Heart left ventricle (tissue), 16 donors: ENCODE measurements at regions of chr4 and their contacts with region 1.

Region 1: GRCh38 chr4:102344954-102345794 is at the start of gene SLC39A8:
- DNase-seq: peak; percentile 81 to 92 (median 85)
- ATAC-seq: peak; percentile 86 to 97 (median 96)
- H3K4me3 ChIP-seq: peak within 1 kb of the TSS; percentile 42 to 82 (median 58)
- H3K27ac ChIP-seq: peak within 1 kb of the TSS in 11 of 12 donors; percentile 7 to 92 (median 58)
- H3K4me1 ChIP-seq: peaks cover 0 to 49% (median 7%) of the 10 kb centered on the region in 12 donors
- H3K27me3 ChIP-seq: no peaks in the 10 kb centered on the region
- CTCF ChIP-seq: peak; percentile 47 to 86 (median 78)
- POLR2A ChIP-seq: peak in 1 of 2 donors; percentile 46
- total RNA-seq, gene SLC39A8: 1.9 to 51.3 (median 3.0) TPM

Region 2: DNA sequence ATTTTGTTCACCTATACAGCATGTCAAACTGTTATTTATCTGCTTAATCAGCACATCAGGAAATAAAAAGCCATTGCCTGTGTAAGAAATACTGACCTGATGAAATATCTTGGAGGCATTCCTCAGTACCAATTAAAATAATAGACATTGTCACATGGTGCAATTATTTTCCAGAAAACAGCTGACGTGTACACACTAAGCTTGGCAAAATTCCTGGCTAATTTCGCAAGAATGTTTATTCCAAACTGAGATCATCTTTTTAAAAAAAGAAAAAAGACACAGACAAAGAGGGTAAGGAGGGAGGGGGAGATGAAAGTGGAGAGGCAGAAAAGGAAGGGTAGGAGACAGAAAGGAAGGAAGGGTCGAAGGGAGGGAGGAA is 94.1 kb after region 1 on chr4:
- intact Hi-C with region 1: loop called in 1 of 10 experiments (anchors 10 kb)
- DNase-seq: peak in 1 of 5 donors; percentile 12
- ATAC-seq: peak; percentile 54 to 88 (median 68)
- H3K4me3 ChIP-seq: no peak overlapping the region
- H3K27ac ChIP-seq: peak overlapping the region in 7 of 12 donors; percentile 0 to 62 (median 50)
- H3K4me1 ChIP-seq: peaks cover 0 to 24% (median 13%) of the 10 kb centered on the region in 12 donors
- H3K27me3 ChIP-seq: no peaks in the 10 kb centered on the region
- CTCF ChIP-seq: no peak
- POLR2A ChIP-seq: no peak

Region 3: DNA sequence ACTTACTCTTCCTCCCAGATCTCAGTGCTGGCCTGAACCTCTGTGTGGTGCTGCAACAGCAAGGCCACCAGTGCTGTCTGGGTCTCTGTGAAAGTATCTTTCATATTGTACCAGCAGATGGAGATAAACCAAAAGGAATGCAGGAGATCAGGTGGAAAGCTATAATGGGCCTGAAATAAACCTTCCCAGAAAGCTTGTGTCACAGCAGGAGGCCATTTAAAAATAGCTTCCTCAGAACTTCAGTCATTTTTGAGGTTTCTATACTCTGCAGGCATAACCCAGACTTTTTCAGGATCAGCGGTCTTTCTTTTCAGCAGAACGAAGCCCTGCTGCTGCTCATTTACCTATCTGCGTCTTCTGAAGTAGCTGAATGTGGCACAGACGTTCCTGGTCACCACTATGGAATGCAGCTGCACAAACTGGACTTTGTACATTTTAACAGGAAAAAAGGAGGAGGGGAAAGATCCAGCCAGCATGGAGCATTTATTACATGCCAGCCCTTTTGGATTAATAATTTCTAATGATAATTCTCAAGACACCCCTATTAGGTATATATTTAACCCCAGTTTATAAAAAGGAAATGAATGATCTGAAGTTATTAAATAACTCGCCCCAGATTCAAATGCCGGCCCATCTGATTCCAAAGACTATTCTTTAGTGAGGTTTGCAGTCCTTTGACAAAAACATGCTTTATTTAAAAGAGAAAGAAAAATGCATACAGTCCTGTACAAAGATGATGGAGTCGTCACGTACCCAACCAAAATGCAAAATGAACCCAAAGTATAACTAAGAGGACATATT is 275.7 kb after region 1 on chr4:
- intact Hi-C with region 1: loop called in 1 of 10 experiments (anchors 10 kb)
- DNase-seq: no peak
- ATAC-seq: peak; percentile 91 to 95 (median 92)
- H3K4me3 ChIP-seq: peak overlapping the region in 7 of 12 donors; percentile 1 to 35 (median 17)
- H3K27ac ChIP-seq: peak overlapping the region in 1 of 12 donors; percentile 58
- H3K4me1 ChIP-seq: peaks cover 0 to 19% (median 4%) of the 10 kb centered on the region in 12 donors
- H3K27me3 ChIP-seq: no peaks in the 10 kb centered on the region
- CTCF ChIP-seq: peak; percentile 18 to 64 (median 46)
- POLR2A ChIP-seq: no peak